Activated CD4-positive, alpha-beta T cell treated with anti-CD3 and anti-CD28 coated beads for 36 hours (primary cell): ENCODE measurements at regions of chrX and their contacts with region 1.

Region 1: GRCh38 chrX:20530406-20530921 is 263.8 kb upstream of the RPS6KA3 start:
- DNase-seq: peak; percentile 68
- ATAC-seq: peak; percentile 39
- H3K4me3 Mint-ChIP-seq: no peak overlapping the region
- H3K27ac Mint-ChIP-seq: no peak overlapping the region
- H3K4me1 Mint-ChIP-seq: peaks cover 2% of the 10 kb centered on the region
- H3K27me3 Mint-ChIP-seq: peaks cover 18% of the 10 kb centered on the region

Region 2: DNA sequence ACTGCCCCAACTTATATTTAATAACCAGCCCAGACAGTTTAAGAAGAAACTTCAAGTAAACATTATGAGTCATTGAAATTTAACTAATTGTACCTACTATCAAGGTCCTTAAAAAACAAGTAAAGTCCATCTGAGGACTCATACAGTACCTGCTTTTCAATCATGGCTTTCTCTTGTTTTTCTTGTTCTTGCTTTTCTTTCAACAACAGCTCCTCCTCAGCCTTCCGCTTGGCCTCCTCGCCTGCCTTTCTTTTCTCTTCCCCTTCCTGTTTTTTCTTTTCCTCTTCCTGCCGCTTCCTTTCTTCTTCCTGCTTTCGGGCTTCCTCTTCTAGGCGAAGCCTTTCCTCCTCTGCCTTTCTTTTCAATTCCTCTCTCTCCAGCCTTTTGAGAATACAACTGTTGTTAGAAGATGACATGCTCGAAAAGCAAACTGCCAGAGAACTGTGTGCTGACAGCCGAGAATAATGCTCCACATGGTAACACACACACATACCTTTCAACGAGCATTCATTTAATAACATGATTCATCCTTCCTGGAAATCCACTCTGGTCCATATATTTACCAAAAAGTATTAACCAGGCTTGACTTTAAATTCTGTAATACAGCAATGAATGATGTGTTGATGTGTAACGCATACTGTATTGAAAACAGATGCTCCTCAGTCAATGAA is 514.4 kb before region 1 on chrX:
- CTCF ChIA-PET with region 1: no interaction called
- POLR2A ChIA-PET with region 1: no interaction called
- intact Hi-C with region 1: no loop called
- DNase-seq: no peak
- ATAC-seq: no peak
- H3K4me3 Mint-ChIP-seq: no peak overlapping the region
- H3K27ac Mint-ChIP-seq: no peak overlapping the region
- H3K4me1 Mint-ChIP-seq: no peaks in the 10 kb centered on the region
- H3K27me3 Mint-ChIP-seq: no peaks in the 10 kb centered on the region

Region 3: DNA sequence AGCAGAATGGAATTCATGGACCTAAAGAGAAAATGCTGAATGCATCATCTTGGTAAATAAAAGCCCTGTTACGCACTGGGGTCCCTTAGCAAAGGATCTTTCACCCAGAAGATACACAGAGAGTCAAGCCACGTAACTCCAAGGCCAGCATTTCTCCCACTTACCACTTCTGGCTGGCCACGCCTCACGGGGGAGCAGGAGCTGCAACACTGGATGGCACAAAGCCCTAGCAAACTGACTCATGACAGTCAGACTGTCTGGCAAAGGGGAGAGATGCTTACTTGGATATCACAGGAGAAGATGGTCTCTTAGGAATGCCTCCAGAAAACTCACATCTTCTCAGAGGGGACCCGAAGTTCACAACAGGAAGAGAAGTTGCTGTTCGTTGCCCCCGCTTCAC is 488.2 kb before region 1 on chrX:
- CTCF ChIA-PET with region 1: no interaction called
- POLR2A ChIA-PET with region 1: no interaction called
- intact Hi-C with region 1: no loop called
- DNase-seq: no peak
- ATAC-seq: no peak
- H3K4me3 Mint-ChIP-seq: no peak overlapping the region
- H3K27ac Mint-ChIP-seq: no peak overlapping the region
- H3K4me1 Mint-ChIP-seq: no peaks in the 10 kb centered on the region
- H3K27me3 Mint-ChIP-seq: no peaks in the 10 kb centered on the region

Region 4: GRCh38 chrX:20718592-20719389 is 188.3 kb after region 1 on chrX:
- CTCF ChIA-PET with region 1: no interaction called
- POLR2A ChIA-PET with region 1: no interaction called
- intact Hi-C with region 1: loop called in 1 of 2 experiments (anchors 10 kb)
- DNase-seq: no peak
- ATAC-seq: no peak
- H3K4me3 Mint-ChIP-seq: no peak overlapping the region
- H3K27ac Mint-ChIP-seq: no peak overlapping the region
- H3K4me1 Mint-ChIP-seq: no peaks in the 10 kb centered on the region
- H3K27me3 Mint-ChIP-seq: peaks cover 5% of the 10 kb centered on the region

Region 5: GRCh38 chrX:21374163-21374993 is 843.9 kb after region 1 on chrX and contains the start of gene CNKSR2:
- CTCF ChIA-PET with region 1: no interaction called
- POLR2A ChIA-PET with region 1: no interaction called
- intact Hi-C with region 1: loop called (anchors 10 kb)
- DNase-seq: peak; percentile 83
- ATAC-seq: peak; percentile 81
- H3K4me3 Mint-ChIP-seq: peak within 1 kb of the TSS; percentile 87
- H3K27ac Mint-ChIP-seq: peak within 1 kb of the TSS; percentile 74
- H3K4me1 Mint-ChIP-seq: peaks cover 31% of the 10 kb centered on the region
- H3K27me3 Mint-ChIP-seq: no peaks in the 10 kb centered on the region
- total RNA-seq, gene CNKSR2: 6.2 to 7.3 TPM

Region 6: DNA sequence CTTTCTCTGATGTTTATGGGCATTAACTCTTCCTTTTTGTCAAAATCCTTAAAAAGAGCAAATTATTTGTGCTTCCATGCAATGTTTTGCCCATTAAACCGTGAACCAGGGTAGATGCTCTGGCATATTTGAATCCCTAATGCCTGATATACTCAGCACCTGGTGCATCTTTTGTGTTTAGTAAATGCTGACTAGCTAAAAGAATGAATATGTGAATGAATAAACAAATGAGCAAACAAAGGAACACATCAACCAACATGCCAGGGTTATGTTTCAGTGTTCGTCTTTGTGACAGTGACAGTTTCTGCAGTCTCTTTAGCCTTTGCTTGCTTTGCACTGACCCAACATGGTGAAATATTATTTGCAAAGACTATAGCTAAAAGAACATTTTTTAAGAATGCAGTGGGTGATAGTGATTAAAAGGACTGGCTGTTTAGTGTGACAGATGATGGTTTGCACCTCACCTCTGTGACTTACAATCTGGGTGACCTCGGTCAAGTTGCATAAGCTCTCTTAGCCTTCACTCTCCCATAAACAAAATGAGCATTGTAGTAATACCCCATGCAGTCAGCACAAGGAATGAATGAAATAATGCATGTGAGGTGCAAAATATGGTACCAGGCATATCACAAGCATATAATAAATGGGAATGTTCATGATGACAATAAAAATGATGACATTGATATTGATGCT is 1198.0 kb after region 1 on chrX:
- CTCF ChIA-PET with region 1: interaction called, 4 read pairs
- POLR2A ChIA-PET with region 1: no interaction called
- intact Hi-C with region 1: loop called in 1 of 2 experiments (anchors 1 kb)
- DNase-seq: no peak
- ATAC-seq: no peak
- H3K4me3 Mint-ChIP-seq: no peak overlapping the region
- H3K27ac Mint-ChIP-seq: no peak overlapping the region
- H3K4me1 Mint-ChIP-seq: no peaks in the 10 kb centered on the region
- H3K27me3 Mint-ChIP-seq: peaks cover 5% of the 10 kb centered on the region

Region 7: GRCh38 chrX:21839334-21840192 is 1309.1 kb after region 1 on chrX and contains the start of gene MBTPS2:
- CTCF ChIA-PET with region 1: no interaction called
- POLR2A ChIA-PET with region 1: no interaction called
- intact Hi-C with region 1: loop called in 1 of 2 experiments (anchors 10 kb)
- DNase-seq: peak; percentile 90
- ATAC-seq: peak; percentile 87
- H3K4me3 Mint-ChIP-seq: peak within 1 kb of the TSS; percentile 84
- H3K27ac Mint-ChIP-seq: peak within 1 kb of the TSS; percentile 92
- H3K4me1 Mint-ChIP-seq: peaks cover 11% of the 10 kb centered on the region
- H3K27me3 Mint-ChIP-seq: no peaks in the 10 kb centered on the region
- total RNA-seq, gene MBTPS2: 6.9 to 7.8 TPM